MCF 10A (cell line): ENCODE measurements at regions of chr3 and their contacts with region 1.

Region 1: DNA sequence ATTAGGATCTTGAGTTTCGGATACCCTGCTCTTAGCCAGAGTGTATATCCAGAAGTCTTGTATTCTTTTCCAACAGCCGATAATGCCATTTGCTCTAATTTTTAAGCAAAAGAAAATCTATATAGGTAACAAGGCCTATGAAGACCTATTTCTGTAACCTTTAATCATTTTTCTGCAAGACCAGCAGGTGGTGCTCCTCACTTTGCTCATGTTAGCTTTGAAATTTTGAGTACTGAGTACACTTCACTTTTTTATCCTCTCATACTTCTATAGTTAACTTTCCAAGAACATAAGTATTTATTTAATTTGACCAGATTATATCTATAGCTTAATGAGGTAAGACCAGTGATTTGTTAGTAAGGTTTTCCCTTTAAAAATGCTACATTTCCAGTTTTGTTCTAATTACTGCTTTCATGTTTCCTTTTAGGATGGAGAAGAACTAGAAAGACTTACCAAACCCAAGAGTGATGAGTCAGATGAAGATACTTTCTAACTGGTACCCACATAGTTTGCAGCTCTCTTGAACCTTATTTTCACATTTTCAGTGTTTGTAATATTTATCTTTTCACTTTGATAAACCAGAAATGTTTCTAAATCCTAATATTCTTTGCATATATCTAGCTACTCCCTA is 20.5 kb downstream of the SLC35A5 start:
- DNase-seq: peak; percentile 51
- H3K4me3 Mint-ChIP-seq: no peak overlapping the region
- H3K27ac Mint-ChIP-seq: no peak overlapping the region
- H3K4me1 Mint-ChIP-seq: no peaks in the 10 kb centered on the region
- H3K27me3 Mint-ChIP-seq: no peaks in the 10 kb centered on the region
- CTCF ChIP-seq: peak; percentile 51

Region 2: DNA sequence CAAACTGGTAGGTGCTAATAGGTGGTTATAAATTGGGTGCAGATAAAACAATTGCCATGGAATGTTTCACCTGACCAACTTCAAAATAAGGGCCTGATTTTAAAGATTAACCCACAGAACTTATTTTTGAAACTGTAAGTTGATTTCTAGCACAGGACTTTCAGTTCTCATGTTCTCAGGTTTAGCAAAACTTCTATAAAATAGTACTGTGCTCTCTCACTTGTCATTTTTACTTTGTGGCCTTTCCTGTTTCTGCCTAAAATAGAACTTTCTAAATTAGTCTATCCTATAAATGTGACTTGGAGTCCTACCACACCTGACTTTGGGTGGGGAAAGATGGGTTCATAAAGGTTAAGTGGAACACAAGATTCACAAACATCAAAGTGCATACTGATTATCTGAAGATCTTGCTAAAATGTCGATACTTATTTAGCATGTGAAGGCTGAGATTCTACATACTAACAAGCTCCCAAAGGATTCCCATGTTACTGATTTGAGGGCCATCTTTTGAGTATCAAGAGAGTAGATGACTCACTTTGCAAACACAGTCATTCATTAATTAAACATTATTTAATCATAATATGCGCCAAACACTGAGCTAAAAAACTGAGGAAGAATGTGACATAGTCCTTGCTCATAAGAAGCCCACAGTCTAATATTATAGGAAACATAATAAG is 121.7 kb before region 1 on chr3:
- CTCF ChIA-PET with region 1: no interaction called
- POLR2A ChIA-PET with region 1: no interaction called
- intact Hi-C with region 1: no loop called
- DNase-seq: no peak
- H3K4me3 Mint-ChIP-seq: no peak overlapping the region
- H3K27ac Mint-ChIP-seq: no peak overlapping the region
- H3K4me1 Mint-ChIP-seq: no peaks in the 10 kb centered on the region
- H3K27me3 Mint-ChIP-seq: no peaks in the 10 kb centered on the region
- CTCF ChIP-seq: no peak

Region 3: GRCh38 chr3:112489674-112490479 is 92.5 kb before region 1 on chr3:
- CTCF ChIA-PET with region 1: no interaction called
- POLR2A ChIA-PET with region 1: no interaction called
- intact Hi-C with region 1: no loop called
- DNase-seq: no peak
- H3K4me3 Mint-ChIP-seq: no peak overlapping the region
- H3K27ac Mint-ChIP-seq: no peak overlapping the region
- H3K4me1 Mint-ChIP-seq: no peaks in the 10 kb centered on the region
- H3K27me3 Mint-ChIP-seq: no peaks in the 10 kb centered on the region
- CTCF ChIP-seq: no peak

Region 4: GRCh38 chr3:112561731-112562688 is 20.3 kb before region 1 on chr3 and contains the starts of genes ATG3 and SLC35A5:
- CTCF ChIA-PET with region 1: interaction called, 16 read pairs
- POLR2A ChIA-PET with region 1: interaction called, 5 read pairs
- intact Hi-C with region 1: no loop called
- DNase-seq: peak; percentile 99
- H3K4me3 Mint-ChIP-seq: peak within 1 kb of the TSS; percentile 96
- H3K27ac Mint-ChIP-seq: peak within 1 kb of the TSS; percentile 98
- H3K4me1 Mint-ChIP-seq: peaks cover 12% of the 10 kb centered on the region
- H3K27me3 Mint-ChIP-seq: no peaks in the 10 kb centered on the region
- CTCF ChIP-seq: no peak
- total RNA-seq, gene ATG3: 87.8 and 97.2 TPM in 2 replicates
- total RNA-seq, gene SLC35A5: 23.3 and 26.7 TPM in 2 replicates

Region 5: GRCh38 chr3:112602217-112602838 is 20.0 kb after region 1 on chr3:
- CTCF ChIA-PET with region 1: interaction called, 12 read pairs
- POLR2A ChIA-PET with region 1: interaction called, 6 read pairs
- intact Hi-C with region 1: loop called (anchors 2 kb)
- DNase-seq: no peak
- H3K4me3 Mint-ChIP-seq: no peak overlapping the region
- H3K27ac Mint-ChIP-seq: no peak overlapping the region
- H3K4me1 Mint-ChIP-seq: no peaks in the 10 kb centered on the region
- H3K27me3 Mint-ChIP-seq: no peaks in the 10 kb centered on the region
- CTCF ChIP-seq: no peak

Region 6: GRCh38 chr3:112629425-112629824 is 47.1 kb after region 1 on chr3:
- CTCF ChIA-PET with region 1: interaction called, 20 read pairs
- POLR2A ChIA-PET with region 1: interaction called, 3 read pairs
- intact Hi-C with region 1: no loop called
- DNase-seq: peak; percentile 79
- H3K4me3 Mint-ChIP-seq: peak overlapping the region; percentile 29
- H3K27ac Mint-ChIP-seq: peak overlapping the region; percentile 6
- H3K4me1 Mint-ChIP-seq: peaks cover 13% of the 10 kb centered on the region
- H3K27me3 Mint-ChIP-seq: no peaks in the 10 kb centered on the region
- CTCF ChIP-seq: no peak

Region 7: DNA sequence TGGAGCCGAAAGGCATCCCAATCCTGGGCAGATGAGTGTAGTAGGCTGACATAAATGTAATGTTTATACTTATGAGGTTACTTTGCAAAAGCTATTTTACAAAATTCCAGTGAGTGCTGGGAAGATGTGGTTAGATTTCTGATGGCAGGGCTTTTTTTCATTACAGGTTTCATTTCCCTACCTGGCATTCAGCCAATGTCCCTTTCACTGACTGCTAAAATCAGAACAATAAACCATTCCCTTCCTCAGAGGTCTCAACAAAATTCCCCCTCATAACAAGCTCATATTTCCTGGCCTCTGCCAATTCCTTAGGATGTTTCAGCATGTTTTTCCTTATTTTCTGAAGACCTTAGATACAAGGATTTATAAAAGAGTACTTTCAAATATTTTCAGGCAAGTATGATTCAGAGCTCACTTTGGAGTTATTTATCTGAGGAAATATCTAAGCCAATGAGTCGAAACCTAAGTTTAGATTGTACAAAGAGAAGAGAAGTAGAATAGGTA is 99.5 kb after region 1 on chr3:
- CTCF ChIA-PET with region 1: no interaction called
- POLR2A ChIA-PET with region 1: no interaction called
- intact Hi-C with region 1: no loop called
- DNase-seq: peak; percentile 36
- H3K4me3 Mint-ChIP-seq: no peak overlapping the region
- H3K27ac Mint-ChIP-seq: peak overlapping the region; percentile 72
- H3K4me1 Mint-ChIP-seq: peaks cover 11% of the 10 kb centered on the region
- H3K27me3 Mint-ChIP-seq: no peaks in the 10 kb centered on the region
- CTCF ChIP-seq: no peak

Region 8: GRCh38 chr3:112699436-112699978 is 117.1 kb after region 1 on chr3:
- CTCF ChIA-PET with region 1: no interaction called
- POLR2A ChIA-PET with region 1: no interaction called
- intact Hi-C with region 1: loop called (anchors 1 kb)
- DNase-seq: peak; percentile 66
- H3K4me3 Mint-ChIP-seq: no peak overlapping the region
- H3K27ac Mint-ChIP-seq: no peak overlapping the region
- H3K4me1 Mint-ChIP-seq: peaks cover 8% of the 10 kb centered on the region
- H3K27me3 Mint-ChIP-seq: peaks cover 21% of the 10 kb centered on the region
- CTCF ChIP-seq: peak; percentile 44

Region 9: GRCh38 chr3:112814266-112814665 is 231.9 kb after region 1 on chr3:
- CTCF ChIA-PET with region 1: interaction called, 16 read pairs
- POLR2A ChIA-PET with region 1: interaction called, 4 read pairs
- intact Hi-C with region 1: loop called (anchors 1 kb)
- DNase-seq: peak; percentile 58
- H3K4me3 Mint-ChIP-seq: no peak overlapping the region
- H3K27ac Mint-ChIP-seq: no peak overlapping the region
- H3K4me1 Mint-ChIP-seq: peaks cover 11% of the 10 kb centered on the region
- H3K27me3 Mint-ChIP-seq: no peaks in the 10 kb centered on the region
- CTCF ChIP-seq: peak; percentile 33

Region 10: GRCh38 chr3:112979240-112979832 is 397.0 kb after region 1 on chr3:
- CTCF ChIA-PET with region 1: interaction called, 23 read pairs
- POLR2A ChIA-PET with region 1: no interaction called
- intact Hi-C with region 1: loop called (anchors 1 kb)
- DNase-seq: peak; percentile 56
- H3K4me3 Mint-ChIP-seq: no peak overlapping the region
- H3K27ac Mint-ChIP-seq: no peak overlapping the region
- H3K4me1 Mint-ChIP-seq: no peaks in the 10 kb centered on the region
- H3K27me3 Mint-ChIP-seq: peaks cover 20% of the 10 kb centered on the region
- CTCF ChIP-seq: peak; percentile 41